ENCODE measurements at regions of chr4 and their contacts with region 1.

Region 1: DNA sequence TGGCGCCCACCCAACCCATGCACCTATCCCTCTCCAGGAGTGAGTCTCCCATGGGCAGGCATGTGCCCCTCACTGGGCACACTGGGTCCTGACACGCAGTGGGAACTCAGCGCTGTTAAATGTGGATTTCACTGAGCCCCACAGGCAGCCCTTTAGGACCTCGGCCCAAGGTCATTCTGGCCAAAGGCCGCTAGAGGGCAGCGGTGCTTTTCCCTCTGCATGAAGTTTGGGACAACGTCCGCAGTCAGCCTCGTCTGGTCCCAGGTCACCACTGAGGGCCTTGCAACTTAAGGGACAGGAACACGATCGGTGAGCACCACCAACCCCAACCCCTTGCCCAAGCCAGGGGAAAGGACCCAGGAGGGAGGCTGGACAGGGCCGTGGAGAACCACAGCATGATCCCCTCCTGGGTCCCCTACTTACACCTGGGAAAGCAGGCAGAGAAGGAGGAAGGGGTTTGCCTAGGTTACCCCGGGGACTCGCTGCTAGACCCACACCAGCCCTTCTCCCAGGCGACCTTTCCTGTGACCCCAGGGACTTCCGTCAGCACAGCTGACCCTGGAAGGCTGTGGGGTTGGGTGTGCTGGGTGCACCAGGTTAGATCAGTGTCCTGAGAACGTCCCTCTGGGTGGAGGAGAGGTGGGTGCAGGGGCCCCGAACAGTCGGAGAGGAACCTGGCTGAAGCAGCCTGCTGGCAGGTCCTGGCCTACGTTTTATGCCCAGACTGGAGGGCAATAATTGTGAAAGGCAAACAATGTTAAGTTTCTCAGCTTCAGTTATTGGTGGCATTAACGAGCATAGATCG is 24.0 kb downstream of the CYTL1 start:
- DNase-seq: peak; percentile 54
- ATAC-seq: peak; percentile 89
- H3K4me3 ChIP-seq: no peak overlapping the region
- H3K27ac ChIP-seq: no peak overlapping the region
- H3K4me1 ChIP-seq: peaks cover 9 to 20% of the 10 kb centered on the region in 2 experiments; a peak in 3 of 4 replicates
- H3K27me3 ChIP-seq: peaks cover 10% of the 10 kb centered on the region; the same call in 1 of the 2 replicates
- CTCF ChIP-seq: peak; percentile 71 to 96 (median 94)
- POLR2A ChIP-seq: no peak
- RAD21 ChIP-seq: peak; percentile 87

Region 2: DNA sequence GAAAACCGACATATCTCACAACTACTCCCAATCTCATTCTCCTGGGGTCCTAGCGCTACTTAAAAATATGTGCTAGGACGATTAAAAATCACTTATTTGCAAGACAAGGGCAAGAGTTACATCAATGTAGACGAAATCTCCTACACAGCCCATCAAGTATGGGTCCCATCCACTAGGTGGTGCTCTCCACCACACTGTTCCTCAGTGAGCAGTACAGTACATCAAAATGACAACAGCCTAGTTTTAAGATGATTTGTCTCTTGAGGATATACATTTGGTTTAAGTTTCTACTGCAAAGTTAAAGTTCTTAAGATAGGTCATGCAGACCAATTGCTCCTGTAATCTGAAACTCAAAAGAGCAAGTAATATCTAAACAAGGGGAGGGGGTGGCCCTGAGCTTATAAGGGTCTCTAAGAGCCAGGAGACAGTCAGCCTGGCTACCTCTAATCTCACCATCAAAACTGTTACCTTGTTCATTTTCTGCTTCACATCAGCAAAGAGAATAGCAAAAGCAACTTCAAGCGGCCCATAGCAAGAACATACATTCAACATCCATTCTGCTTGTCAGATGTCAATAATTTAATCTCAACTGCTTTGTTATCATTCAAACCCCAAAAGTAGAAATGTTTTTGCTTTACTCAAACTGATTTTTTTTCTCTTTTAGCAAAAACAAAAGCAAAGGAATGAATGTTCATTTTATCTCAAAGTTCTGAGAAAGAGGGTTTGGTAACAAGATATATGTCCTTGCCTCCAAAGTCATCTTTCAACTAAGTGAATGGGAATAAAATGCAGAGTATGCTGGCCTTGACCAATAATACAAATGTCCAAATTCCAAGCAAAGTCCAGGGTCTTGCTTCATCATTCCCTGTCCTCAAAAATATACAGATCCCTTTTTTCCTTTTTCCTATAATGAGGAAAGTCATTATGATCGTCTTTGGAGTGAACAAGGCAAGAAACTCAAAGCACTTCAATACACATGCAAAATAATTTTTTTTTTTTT is 506.6 kb before region 1 on chr4:
- CTCF ChIA-PET with region 1: no interaction called
- POLR2A ChIA-PET with region 1: no interaction called
- RAD21 ChIA-PET with region 1: no interaction called
- intact Hi-C with region 1: loop called (anchors 2 kb)
- DNase-seq: peak; percentile 60
- ATAC-seq: peak; percentile 99
- H3K4me3 ChIP-seq: no peak overlapping the region
- H3K27ac ChIP-seq: no peak overlapping the region
- H3K4me1 ChIP-seq: no peaks in the 10 kb centered on the region
- H3K27me3 ChIP-seq: no peaks in the 10 kb centered on the region
- CTCF ChIP-seq: peak; percentile 60 to 94 (median 93); a peak in 5 of 6 replicates
- POLR2A ChIP-seq: no peak
- RAD21 ChIP-seq: peak; percentile 86

Region 3: GRCh38 chr4:5142726-5143125 is 147.4 kb after region 1 on chr4:
- CTCF ChIA-PET with region 1: no interaction called
- POLR2A ChIA-PET with region 1: no interaction called
- RAD21 ChIA-PET with region 1: no interaction called
- intact Hi-C with region 1: loop called (anchors 1 kb)
- DNase-seq: peak; percentile 16
- ATAC-seq: peak; percentile 60
- H3K4me3 ChIP-seq: no peak overlapping the region
- H3K27ac ChIP-seq: no peak overlapping the region
- H3K4me1 ChIP-seq: no peaks in the 10 kb centered on the region
- H3K27me3 ChIP-seq: peaks cover 31% of the 10 kb centered on the region
- CTCF ChIP-seq: peak; percentile 47 to 63 (median 57); a peak in 5 of 6 replicates
- POLR2A ChIP-seq: no peak
- RAD21 ChIP-seq: peak; percentile 58

Region 4: DNA sequence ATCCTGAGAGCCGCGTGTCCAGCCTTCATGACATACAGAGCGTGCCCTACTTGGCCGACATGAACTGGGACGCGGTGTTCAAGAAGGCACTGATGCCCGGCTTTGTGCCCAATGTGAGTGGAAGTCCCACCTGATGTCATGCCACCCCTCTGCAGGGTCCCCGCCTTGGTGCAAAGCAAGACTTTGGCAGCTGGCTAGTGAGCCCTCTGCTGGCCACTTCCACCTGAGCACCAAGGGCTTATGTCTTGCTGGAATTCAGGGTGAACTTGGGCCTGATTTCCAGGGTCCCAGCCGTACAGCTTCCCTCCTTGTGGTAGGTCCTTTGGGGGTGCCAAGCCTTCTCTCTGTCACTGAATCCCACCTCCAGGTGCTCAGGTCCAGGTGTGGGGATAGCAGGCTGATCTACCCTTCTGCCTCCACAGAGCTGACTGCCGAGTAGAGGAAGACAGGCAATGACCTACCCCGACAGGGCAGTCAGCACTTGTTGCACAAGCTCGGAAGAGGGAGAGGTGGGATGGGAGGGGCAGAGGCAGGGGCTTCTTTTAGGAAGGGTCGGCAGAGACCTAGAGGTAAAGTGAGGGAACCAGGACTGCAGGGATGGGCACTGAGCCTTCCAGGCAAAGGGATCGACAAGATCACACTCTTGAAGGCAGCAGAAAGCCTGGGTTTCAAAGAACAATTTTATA is 465.0 kb after region 1 on chr4:
- CTCF ChIA-PET with region 1: no interaction called
- POLR2A ChIA-PET with region 1: no interaction called
- RAD21 ChIA-PET with region 1: no interaction called
- intact Hi-C with region 1: loop called (anchors 2 kb)
- DNase-seq: peak; percentile 4
- ATAC-seq: peak; percentile 80
- H3K4me3 ChIP-seq: no peak overlapping the region
- H3K27ac ChIP-seq: no peak overlapping the region
- H3K4me1 ChIP-seq: no peaks in the 10 kb centered on the region
- H3K27me3 ChIP-seq: peaks cover 29% of the 10 kb centered on the region; the same call in 1 of the 2 replicates
- CTCF ChIP-seq: peak; percentile 22 to 74 (median 72); a peak in 4 of 6 replicates
- POLR2A ChIP-seq: no peak
- RAD21 ChIP-seq: peak; percentile 48

Region 5: DNA sequence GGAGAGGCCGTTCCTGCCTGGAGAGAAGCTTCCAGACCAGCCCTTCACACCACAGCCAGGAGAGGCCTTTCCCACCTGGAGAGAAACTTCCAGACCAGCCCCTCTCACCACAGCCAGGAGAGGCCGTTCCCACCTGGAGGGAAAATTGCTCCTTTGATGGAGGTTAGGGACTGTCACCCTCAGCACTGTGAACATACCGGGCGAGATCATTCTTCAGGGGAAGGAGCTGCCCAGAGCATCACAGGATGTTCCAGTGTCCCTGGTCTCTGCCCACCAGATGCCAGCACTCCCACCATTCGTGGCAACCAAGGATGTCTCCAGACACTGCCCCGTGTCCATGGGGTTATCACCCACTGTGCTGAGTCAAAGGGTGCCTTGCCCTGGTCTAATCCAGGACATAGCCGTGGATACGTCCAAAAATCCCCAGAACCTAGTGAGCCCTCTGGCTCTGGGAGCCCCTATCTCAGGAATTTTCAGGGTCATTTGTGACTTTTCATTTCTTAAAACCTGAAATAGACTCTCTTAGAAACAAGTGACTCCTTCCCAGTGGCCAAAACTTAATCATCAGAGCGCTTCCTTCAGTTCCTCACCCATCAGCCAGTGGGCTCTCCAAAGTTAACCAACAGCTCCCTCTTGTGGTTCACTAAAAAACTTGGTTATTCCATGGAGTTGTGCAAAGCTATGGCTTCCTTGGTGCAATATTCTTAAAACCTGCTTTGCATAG is 817.4 kb after region 1 on chr4:
- CTCF ChIA-PET with region 1: interaction called, 4 read pairs
- POLR2A ChIA-PET with region 1: no interaction called
- RAD21 ChIA-PET with region 1: no interaction called
- intact Hi-C with region 1: loop called (anchors 5 kb)
- DNase-seq: peak; percentile 62
- ATAC-seq: peak; percentile 95
- H3K4me3 ChIP-seq: no peak overlapping the region
- H3K27ac ChIP-seq: no peak overlapping the region
- H3K4me1 ChIP-seq: no peaks in the 10 kb centered on the region
- H3K27me3 ChIP-seq: no peaks in the 10 kb centered on the region
- CTCF ChIP-seq: peak; percentile 74 to 81 (median 78)
- POLR2A ChIP-seq: no peak
- RAD21 ChIP-seq: peak; percentile 87

Region 6: GRCh38 chr4:5988086-5988845 is 993.0 kb after region 1 on chr4:
- CTCF ChIA-PET with region 1: no interaction called
- POLR2A ChIA-PET with region 1: no interaction called
- RAD21 ChIA-PET with region 1: no interaction called
- intact Hi-C with region 1: no loop called
- DNase-seq: no peak
- ATAC-seq: no peak
- H3K4me3 ChIP-seq: no peak overlapping the region
- H3K27ac ChIP-seq: no peak overlapping the region
- H3K4me1 ChIP-seq: no peaks in the 10 kb centered on the region
- H3K27me3 ChIP-seq: peaks cover 19% of the 10 kb centered on the region
- CTCF ChIP-seq: no peak
- POLR2A ChIP-seq: no peak
- RAD21 ChIP-seq: no peak